ENCODE measurements at regions of chr1 and their contacts with region 1.

Region 1: GRCh38 chr1:92749024-92749634 is 35.8 kb downstream of the EVI5 start:
- DNase-seq: no peak
- H3K4me3 ChIP-seq: no peak overlapping the region
- H3K27me3 ChIP-seq: no peaks in the 10 kb centered on the region
- CTCF ChIP-seq: peak; percentile 81

Region 2: GRCh38 chr1:92310185-92310597 is 438.9 kb before region 1 on chr1:
- CTCF ChIA-PET with region 1: no interaction called
- POLR2A ChIA-PET with region 1: no interaction called
- DNase-seq: no peak
- H3K4me3 ChIP-seq: no peak overlapping the region
- H3K27me3 ChIP-seq: no peaks in the 10 kb centered on the region
- CTCF ChIP-seq: peak; percentile 60

Region 3: GRCh38 chr1:92730476-92730875 is 18.7 kb before region 1 on chr1:
- CTCF ChIA-PET with region 1: interaction called, 12 read pairs
- POLR2A ChIA-PET with region 1: no interaction called
- DNase-seq: no peak
- H3K4me3 ChIP-seq: no peak overlapping the region
- H3K27me3 ChIP-seq: no peaks in the 10 kb centered on the region
- CTCF ChIP-seq: no peak

Region 4: DNA sequence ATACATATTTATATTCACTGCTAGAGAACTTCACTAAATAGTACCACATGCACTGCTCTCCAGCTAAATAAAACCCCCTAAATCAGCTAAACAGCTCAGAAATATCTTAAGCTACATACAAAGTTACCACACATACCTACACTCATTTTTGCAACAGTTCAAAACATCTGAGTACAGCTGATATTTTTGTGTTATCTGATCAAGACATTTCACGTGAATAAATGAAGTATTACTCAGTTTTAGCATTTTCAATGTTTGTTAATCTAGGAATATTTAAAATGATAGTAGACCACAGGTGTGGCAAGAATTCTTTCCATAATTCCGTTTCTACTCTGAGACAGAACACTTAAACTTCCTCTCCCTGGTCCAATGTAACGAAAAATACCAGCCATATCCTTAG is 15.0 kb after region 1 on chr1:
- CTCF ChIA-PET with region 1: interaction called, 11 read pairs
- POLR2A ChIA-PET with region 1: no interaction called
- DNase-seq: no peak
- H3K4me3 ChIP-seq: no peak overlapping the region
- H3K27me3 ChIP-seq: no peaks in the 10 kb centered on the region
- CTCF ChIP-seq: no peak

Region 5: DNA sequence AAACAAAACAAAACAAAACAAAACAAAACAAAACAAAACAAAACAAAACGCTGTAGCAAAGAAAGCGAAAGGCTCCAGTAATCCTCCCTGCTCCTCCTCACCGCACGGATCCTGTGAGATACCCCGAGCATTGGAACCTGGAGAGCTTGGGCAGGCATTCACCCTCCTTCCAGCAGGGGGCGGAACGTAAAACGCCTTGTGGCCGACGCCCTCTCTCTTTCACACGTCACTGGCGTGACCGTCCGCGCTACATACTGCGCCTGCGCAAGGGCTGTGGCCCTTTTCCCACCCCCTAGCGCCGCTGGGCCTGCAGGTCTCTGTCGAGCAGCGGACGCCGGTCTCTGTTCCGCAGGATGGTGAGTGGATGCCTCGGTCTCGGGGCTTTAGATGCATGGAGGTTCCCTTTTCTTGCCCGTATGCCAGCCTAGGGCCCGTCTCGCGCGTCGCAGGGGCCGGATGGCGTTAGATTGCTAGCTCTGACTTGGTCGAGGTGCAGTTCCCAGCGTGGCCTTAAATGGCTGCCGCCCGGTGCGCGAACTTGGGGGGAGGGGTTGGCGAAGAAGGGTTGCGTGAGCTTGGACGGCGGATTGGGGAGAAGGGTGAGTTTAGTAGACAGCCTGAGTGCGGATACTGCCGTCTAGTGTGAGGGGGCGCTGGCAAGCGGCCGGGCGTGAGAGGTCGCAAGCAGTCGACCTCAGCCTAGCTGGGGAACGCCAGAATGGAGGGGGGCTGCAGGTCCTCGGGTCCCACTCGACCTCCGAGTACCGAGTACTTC is 82.8 kb after region 1 on chr1 and contains the start of gene RPL5:
- CTCF ChIA-PET with region 1: interaction called, 34 read pairs
- POLR2A ChIA-PET with region 1: no interaction called
- DNase-seq: peak; percentile 82
- H3K4me3 ChIP-seq: peak within 1 kb of the TSS; percentile 62
- H3K27me3 ChIP-seq: no peaks in the 10 kb centered on the region
- CTCF ChIP-seq: peak; percentile 97
- polyA plus RNA-seq, gene RPL5: 1,389 and 2,073 TPM in 2 replicates